Kidney (tissue), 22 donors: ENCODE measurements at regions of chr2 and their contacts with region 1.

Region 1: DNA sequence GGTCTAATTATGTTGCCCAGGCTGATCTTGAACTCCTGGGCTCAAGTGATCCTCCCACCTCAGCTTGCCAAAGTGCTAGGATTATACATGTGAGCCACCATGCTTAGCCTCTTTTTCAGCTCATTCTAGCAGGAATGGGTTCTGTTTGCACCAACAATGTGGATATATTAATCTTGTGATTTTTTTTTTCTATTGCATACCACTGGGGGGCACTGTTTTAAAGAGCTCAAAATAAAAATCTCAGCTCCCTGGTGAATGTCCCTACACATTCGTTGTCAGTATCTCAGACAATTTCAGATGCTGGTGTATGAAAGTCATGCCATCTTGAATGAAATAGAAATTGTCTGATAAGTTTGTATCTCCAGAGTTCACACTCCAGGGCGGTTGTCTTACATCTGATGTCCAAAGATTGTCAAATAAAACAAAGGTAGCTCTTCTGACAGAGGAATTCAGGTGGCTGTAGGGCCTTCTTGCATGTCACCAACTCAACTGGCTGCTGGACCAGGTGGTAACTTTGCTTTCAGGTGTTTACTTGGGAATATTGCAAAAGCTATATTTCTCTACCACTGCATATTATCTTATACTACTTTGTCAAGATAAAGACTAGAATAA is 3.1 kb upstream of the MATN3 start:
- DNase-seq: peak in 2 of 5 donors; percentile 63 to 81
- H3K4me3 ChIP-seq: no peak overlapping the region
- H3K27ac ChIP-seq: no peak overlapping the region
- H3K4me1 ChIP-seq: no peaks in the 10 kb centered on the region
- H3K27me3 ChIP-seq: no peaks in the 10 kb centered on the region
- CTCF ChIP-seq: peak; percentile 52

Region 2: GRCh38 chr2:20097879-20098714 is 82.5 kb after region 1 on chr2:
- intact Hi-C with region 1: loop called (anchors 10 kb)
- DNase-seq: peak; percentile 90 to 92 (median 92)
- H3K4me3 ChIP-seq: no peak overlapping the region
- H3K27ac ChIP-seq: no peak overlapping the region
- H3K4me1 ChIP-seq: peaks cover 0 to 2% (median 0%) of the 10 kb centered on the region in 3 donors
- H3K27me3 ChIP-seq: no peaks in the 10 kb centered on the region
- CTCF ChIP-seq: peak; percentile 95